ENCODE measurements at regions of chr20 and their contacts with region 1.

Region 1: GRCh38 chr20:41136680-41137613 is at the start of gene PLCG1:
- DNase-seq: peak; percentile 62 to 72 (median 67)
- H3K4me3 ChIP-seq: peak within 1 kb of the TSS; percentile 62 to 85 (median 75)
- H3K27ac ChIP-seq: peak within 1 kb of the TSS in 1 of 2 experiments; percentile 29
- H3K4me1 ChIP-seq: peaks cover 9 to 33% (median 31%) of the 10 kb centered on the region in 4 experiments
- H3K27me3 ChIP-seq: peaks cover 0 to 33% (median 11%) of the 10 kb centered on the region in 5 experiments

Region 2: GRCh38 chr20:41119546-41120235 is 17.3 kb before region 1 on chr20:
- CTCF ChIA-PET with region 1: interaction called, 56 read pairs
- POLR2A ChIA-PET with region 1: interaction called, 9 read pairs
- DNase-seq: no peak
- H3K4me3 ChIP-seq: no peak overlapping the region
- H3K27ac ChIP-seq: no peak overlapping the region
- H3K4me1 ChIP-seq: peaks cover 0 to 13% (median 2%) of the 10 kb centered on the region in 4 experiments
- H3K27me3 ChIP-seq: no peaks in the 10 kb centered on the region

Region 3: GRCh38 chr20:41125530-41126457 is 11.2 kb before region 1 on chr20:
- CTCF ChIA-PET with region 1: interaction called, 56 read pairs
- POLR2A ChIA-PET with region 1: interaction called, 9 read pairs
- DNase-seq: no peak
- H3K4me3 ChIP-seq: no peak overlapping the region
- H3K27ac ChIP-seq: no peak overlapping the region
- H3K4me1 ChIP-seq: no peaks in the 10 kb centered on the region
- H3K27me3 ChIP-seq: no peaks in the 10 kb centered on the region

Region 4: DNA sequence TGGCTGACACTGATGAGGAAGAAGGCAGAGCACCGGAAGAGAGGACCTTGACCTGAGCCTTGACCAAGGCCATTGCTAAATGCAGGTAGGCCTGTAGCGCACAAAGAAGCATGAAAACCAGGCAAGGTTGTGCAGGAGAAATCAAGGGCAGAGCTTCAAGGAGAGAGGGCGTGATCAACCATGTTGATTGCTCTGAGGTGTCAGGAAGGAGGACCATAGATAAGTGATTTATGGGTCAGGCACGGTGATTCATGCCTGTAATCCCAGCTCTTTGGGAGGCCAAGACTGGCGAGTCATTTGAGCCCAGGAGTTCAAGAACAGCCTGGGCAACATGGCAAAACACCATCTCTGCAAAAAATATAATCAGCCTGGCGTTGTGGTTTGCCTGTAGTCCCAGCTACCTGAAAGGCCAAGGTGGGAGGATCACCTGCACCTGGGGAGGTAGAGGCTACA is 12.8 kb after region 1 on chr20:
- CTCF ChIA-PET with region 1: interaction called, 41 read pairs
- POLR2A ChIA-PET with region 1: no interaction called
- DNase-seq: peak in 1 of 3 donors; percentile 33
- H3K4me3 ChIP-seq: no peak overlapping the region
- H3K27ac ChIP-seq: no peak overlapping the region
- H3K4me1 ChIP-seq: peaks cover 0 to 15% (median 11%) of the 10 kb centered on the region in 4 experiments
- H3K27me3 ChIP-seq: peaks cover 0 to 59% (median 18%) of the 10 kb centered on the region in 5 experiments

Region 5: GRCh38 chr20:41166201-41167110 is 29.5 kb after region 1 on chr20:
- CTCF ChIA-PET with region 1: interaction called, 14 read pairs
- POLR2A ChIA-PET with region 1: no interaction called
- DNase-seq: no peak
- H3K4me3 ChIP-seq: no peak overlapping the region
- H3K27ac ChIP-seq: no peak overlapping the region
- H3K4me1 ChIP-seq: peaks cover 0 to 12% (median 9%) of the 10 kb centered on the region in 4 experiments
- H3K27me3 ChIP-seq: peaks cover 0 to 86% (median 40%) of the 10 kb centered on the region in 5 experiments

Region 6: DNA sequence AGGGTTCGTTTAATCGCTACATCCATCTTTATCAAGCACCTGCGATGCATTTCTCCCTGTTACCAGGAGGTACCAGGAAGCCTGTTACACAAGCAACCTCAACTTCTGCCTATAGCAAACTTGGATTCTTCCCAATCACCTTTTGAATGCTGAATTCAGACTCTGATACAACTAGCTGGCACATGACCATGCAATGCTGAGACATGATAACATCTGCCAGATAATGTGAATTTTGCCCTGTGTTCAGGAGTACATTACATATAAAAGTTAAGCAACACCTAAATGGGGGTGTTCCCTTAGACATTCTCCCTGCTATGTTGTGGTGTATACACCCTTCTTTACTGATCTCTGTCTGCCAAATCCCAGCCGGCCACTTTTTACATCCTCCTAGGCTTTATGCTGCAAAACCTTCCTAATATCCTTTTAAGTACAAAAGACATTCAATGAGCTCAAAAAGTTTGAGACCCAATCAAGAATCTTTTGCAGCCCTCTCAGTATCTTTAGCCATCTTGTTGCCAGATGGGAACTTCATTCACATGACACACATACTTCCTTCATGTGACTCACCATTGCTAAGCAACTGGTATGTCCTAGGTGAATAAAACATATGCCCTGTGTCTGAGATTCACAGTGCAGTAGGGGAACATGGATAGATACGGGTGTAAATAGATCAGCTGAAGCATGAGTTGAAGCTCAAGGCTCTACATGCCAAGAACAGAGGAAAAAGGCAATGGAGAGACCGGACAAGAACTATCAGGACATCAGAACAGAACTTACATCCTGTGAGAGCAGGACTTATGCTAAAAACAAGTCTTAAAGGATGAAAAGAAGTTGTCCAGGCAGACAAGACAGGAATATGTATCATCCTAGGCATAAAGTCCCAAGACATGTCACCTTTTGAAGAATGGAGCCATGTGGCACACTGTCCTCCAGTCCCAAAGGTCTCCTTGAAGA is 96.3 kb after region 1 on chr20:
- CTCF ChIA-PET with region 1: interaction called, 18 read pairs
- POLR2A ChIA-PET with region 1: no interaction called
- DNase-seq: peak; percentile 23 to 82 (median 68)
- H3K4me3 ChIP-seq: no peak overlapping the region
- H3K27ac ChIP-seq: no peak overlapping the region
- H3K4me1 ChIP-seq: peaks cover 0 to 9% (median 2%) of the 10 kb centered on the region in 4 experiments
- H3K27me3 ChIP-seq: peaks cover 0 to 7% (median 0%) of the 10 kb centered on the region in 5 experiments

Region 7: GRCh38 chr20:41339507-41340326 is 202.8 kb after region 1 on chr20:
- CTCF ChIA-PET with region 1: interaction called, 28 read pairs
- POLR2A ChIA-PET with region 1: no interaction called
- DNase-seq: peak; percentile 45 to 69 (median 67)
- H3K4me3 ChIP-seq: peak overlapping the region in 2 of 7 experiments; percentile 48 to 53
- H3K27ac ChIP-seq: no peak overlapping the region
- H3K4me1 ChIP-seq: peaks cover 0 to 12% (median 10%) of the 10 kb centered on the region in 4 experiments
- H3K27me3 ChIP-seq: peaks cover 0 to 45% (median 15%) of the 10 kb centered on the region in 5 experiments

Measured in common myeloid progenitor, CD34-positive (primary cell).